ENCODE measurements at regions of chr3 and their contacts with region 1.

Region 1: DNA sequence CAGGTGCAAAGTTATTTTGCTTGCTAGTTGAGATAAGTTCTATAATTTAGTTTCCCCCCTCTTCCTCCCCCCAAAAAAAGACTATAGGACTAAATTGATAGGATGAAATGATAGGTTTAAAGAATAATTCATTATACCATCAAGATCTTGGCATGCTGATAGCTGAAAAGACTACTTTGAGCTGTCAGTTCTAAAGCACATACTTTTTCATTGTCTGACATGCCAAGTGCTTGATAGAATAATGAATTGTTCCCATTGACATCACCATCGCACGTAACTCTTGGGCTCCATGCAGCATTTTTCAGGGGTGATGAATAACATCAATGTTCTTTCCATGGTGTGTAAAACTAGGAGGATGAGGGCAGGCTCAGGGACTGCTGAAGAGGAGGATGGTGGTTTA is 32.3 kb upstream of the TAFA4 start:
- DNase-seq: no peak
- ATAC-seq: no peak
- H3K4me3 ChIP-seq: no peak overlapping the region
- H3K27ac ChIP-seq: no peak overlapping the region
- H3K4me1 ChIP-seq: no peaks in the 10 kb centered on the region
- H3K27me3 ChIP-seq: peaks cover 0 to 3% (median 0%) of the 10 kb centered on the region in 3 donors
- CTCF ChIP-seq: no peak

Region 2: GRCh38 chr3:67048067-67048714 is 1916.5 kb before region 1 on chr3:
- intact Hi-C with region 1: loop called in 1 of 2 experiments (anchors 5 kb)
- DNase-seq: no peak
- ATAC-seq: no peak
- H3K4me3 ChIP-seq: no peak overlapping the region
- H3K27ac ChIP-seq: no peak overlapping the region
- H3K4me1 ChIP-seq: no peaks in the 10 kb centered on the region
- H3K27me3 ChIP-seq: peaks cover 0 to 3% (median 0%) of the 10 kb centered on the region in 3 donors
- CTCF ChIP-seq: no peak

Region 3: DNA sequence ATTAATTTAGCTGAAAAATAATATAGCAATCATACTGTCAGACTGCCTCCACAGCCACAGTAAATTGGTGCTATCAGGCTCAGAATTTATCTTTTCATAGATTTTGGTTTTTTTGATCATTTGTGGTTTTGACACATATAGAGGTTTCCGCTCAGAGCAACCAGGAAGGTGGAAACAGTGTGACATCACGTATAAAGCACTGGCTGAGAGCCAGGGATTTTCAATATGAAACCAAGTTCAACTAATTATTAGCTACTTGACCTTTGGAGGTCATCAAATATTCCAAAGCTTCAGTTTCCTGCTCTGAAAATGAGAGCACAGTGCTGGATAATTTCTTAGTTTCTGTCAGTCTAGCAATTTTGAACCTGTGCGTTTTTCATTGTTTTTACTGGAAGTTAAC is 876.5 kb before region 1 on chr3:
- intact Hi-C with region 1: loop called in 1 of 2 experiments (anchors 5 kb)
- DNase-seq: no peak
- ATAC-seq: no peak
- H3K4me3 ChIP-seq: no peak overlapping the region
- H3K27ac ChIP-seq: no peak overlapping the region
- H3K4me1 ChIP-seq: no peaks in the 10 kb centered on the region
- H3K27me3 ChIP-seq: no peaks in the 10 kb centered on the region
- CTCF ChIP-seq: no peak